Activated T-helper 2 cell treated with anti-CD3 and anti-CD28 coated beads, Interferon-gamma antibody, Interleukin-2, Interleukin-4, amounts not matched to agents 10 μg/mL and 5 μg/mL and 100 μg/mL, durations not matched to agents 14 hours and 24 hours and 36 hours (primary cell): ENCODE measurements at regions of chr16 and their contacts with region 1.

Region 1: GRCh38 chr16:48123104-48123788 is 32.5 kb downstream of the ABCC12 start:
- DNase-seq: no peak
- H3K4me3 Mint-ChIP-seq: no peak overlapping the region
- H3K27ac Mint-ChIP-seq: peak overlapping the region; percentile 64
- H3K4me1 Mint-ChIP-seq: peaks cover 20% of the 10 kb centered on the region
- H3K27me3 Mint-ChIP-seq: peaks cover 6% of the 10 kb centered on the region

Region 2: DNA sequence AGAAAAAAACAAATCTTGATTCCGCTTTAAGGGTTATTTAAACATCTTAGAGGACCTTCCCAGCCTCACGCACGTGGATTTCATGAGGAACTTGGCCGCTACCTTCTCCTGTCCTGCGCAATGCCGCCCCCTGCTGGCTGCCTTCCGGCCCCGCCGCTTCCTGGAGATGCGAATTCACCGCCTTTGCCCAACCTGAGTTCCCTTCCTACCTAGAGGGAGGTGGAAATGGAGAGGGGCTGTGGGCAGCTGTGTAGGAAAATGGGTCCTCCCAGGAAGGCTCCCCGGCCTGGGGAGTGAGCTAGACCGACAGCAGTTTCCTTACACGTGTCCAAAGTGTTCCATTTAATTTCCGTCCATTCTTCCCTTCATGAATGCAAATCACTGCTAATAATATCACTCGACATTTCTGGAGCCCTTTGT is 33.6 kb after region 1 on chr16:
- intact Hi-C with region 1: loop called (anchors 2 kb)
- DNase-seq: peak; percentile 60
- H3K4me3 Mint-ChIP-seq: no peak overlapping the region
- H3K27ac Mint-ChIP-seq: no peak overlapping the region
- H3K4me1 Mint-ChIP-seq: peaks cover 25% of the 10 kb centered on the region
- H3K27me3 Mint-ChIP-seq: peaks cover 38% of the 10 kb centered on the region

Region 3: DNA sequence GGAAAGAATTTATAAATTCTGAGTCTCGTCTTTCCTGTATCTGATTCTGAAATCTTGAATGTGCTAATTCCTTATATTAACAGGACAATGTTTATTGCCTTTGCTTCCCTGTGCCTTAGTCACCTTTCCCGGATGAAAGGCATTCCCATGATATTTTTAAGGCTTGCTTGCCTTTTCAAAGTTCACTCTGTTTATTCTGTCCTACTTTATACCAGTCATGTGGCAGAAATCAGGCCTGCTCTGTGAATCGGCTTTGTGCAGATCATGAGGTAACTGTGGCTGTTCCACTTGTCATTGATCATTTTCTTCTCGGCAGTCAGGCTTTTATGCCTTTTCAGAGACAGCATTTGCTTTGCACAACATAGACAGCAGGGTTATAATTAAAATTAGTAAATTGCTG is 152.9 kb after region 1 on chr16:
- intact Hi-C with region 1: no loop called
- DNase-seq: no peak
- H3K4me3 Mint-ChIP-seq: no peak overlapping the region
- H3K27ac Mint-ChIP-seq: no peak overlapping the region
- H3K4me1 Mint-ChIP-seq: no peaks in the 10 kb centered on the region
- H3K27me3 Mint-ChIP-seq: no peaks in the 10 kb centered on the region